GM12878 (cell line): ENCODE measurements at regions of chr12 and their contacts with region 1.

Region 1: DNA sequence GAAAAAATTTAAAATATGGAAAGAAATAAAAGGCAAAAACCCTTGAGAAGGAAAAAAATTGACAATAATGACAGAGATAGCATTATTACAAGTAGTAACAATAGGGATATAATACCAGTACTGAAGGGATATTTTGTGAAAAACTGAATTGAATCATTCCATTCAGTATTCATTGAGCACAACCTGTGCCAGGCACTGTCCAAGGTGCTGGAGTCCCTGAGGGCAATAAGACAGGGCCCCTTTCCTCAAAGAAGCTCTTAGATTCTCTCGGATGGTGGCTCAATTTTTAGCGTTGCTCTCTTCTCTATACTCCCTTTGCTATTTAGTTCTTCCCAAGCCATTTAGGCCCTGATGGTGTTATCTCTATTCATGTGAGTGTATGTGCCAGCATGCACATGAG is 34.3 kb upstream of the GAS2L3 start:
- DNase-seq: no peak
- ATAC-seq: peak; percentile 42; the same call in 1 of the 3 replicates
- H3K4me3 ChIP-seq: no peak overlapping the region
- H3K27ac ChIP-seq: no peak overlapping the region
- H3K4me1 ChIP-seq: no peaks in the 10 kb centered on the region
- H3K27me3 ChIP-seq: no peaks in the 10 kb centered on the region
- CTCF ChIP-seq: no peak
- EP300 ChIP-seq: no peak
- POLR2A ChIP-seq: no peak
- RAD21 ChIP-seq: no peak

Region 2: DNA sequence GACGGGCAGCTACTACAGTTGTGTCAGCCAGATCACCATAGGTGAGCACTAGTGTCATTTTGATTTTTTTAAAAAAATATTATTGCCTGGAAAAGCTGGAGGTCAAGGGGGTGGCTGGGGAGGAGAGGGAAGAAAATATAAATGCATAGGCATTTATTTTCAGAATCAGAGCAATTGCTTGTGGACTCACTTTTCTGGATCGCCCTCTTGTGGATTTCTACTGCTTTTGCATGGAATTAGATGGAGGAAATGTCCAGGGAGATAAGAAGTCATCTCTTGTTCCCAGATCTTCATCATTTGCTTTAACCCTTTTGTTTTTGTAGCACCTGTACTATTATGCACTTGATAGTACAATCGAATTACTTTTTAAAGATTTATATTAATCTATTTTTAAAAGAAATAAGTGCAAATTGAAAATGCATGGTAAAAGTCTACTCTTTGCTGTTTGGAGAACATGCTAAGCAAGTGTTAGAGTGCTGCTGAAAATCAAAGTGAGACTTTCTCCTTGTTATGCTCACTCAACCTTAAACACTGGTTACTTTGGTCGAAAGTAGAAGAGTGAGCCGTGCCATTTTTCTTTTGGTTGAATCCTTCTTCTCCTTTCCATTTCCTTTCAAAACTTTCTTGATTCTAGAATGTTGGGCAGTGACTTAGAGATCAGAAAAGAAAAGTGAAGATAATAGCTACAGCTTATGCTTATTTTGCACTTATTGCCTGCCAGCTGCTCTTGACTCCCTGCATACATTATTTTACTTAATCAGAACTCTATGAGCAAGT is 194.8 kb after region 1 on chr12:
- CTCF ChIA-PET with region 1: no interaction called
- POLR2A ChIA-PET with region 1: no interaction called
- RAD21 ChIA-PET with region 1: no interaction called
- SMC1A ChIA-PET with region 1: no interaction called
- in situ Hi-C with region 1: no loop called
- intact Hi-C with region 1: loop called (anchors 10 kb)
- DNase-seq: no peak
- ATAC-seq: peak; percentile 42
- H3K4me3 ChIP-seq: no peak overlapping the region
- H3K27ac ChIP-seq: no peak overlapping the region
- H3K4me1 ChIP-seq: peaks cover 5% of the 10 kb centered on the region; the same call in 1 of the 2 replicates
- H3K27me3 ChIP-seq: no peaks in the 10 kb centered on the region; a peak in 2 of 4 replicates
- CTCF ChIP-seq: peak; percentile 26 to 32 (median 28); a peak in 3 of 6 replicates
- EP300 ChIP-seq: no peak
- POLR2A ChIP-seq: no peak
- RAD21 ChIP-seq: 0 out of 2 replicates have a peak, but pooled peaks have one; percentile 15